Esophagus muscularis mucosa (tissue), 4 donors: ENCODE measurements at regions of chr1 and their contacts with region 1.

Region 1: GRCh38 chr1:100883963-100884362 is 10.7 kb downstream of the EXTL2 start:
- DNase-seq: no peak
- H3K4me3 ChIP-seq: no peak overlapping the region
- H3K27ac ChIP-seq: no peak overlapping the region
- H3K4me1 ChIP-seq: no peaks in the 10 kb centered on the region
- H3K27me3 ChIP-seq: no peaks in the 10 kb centered on the region
- CTCF ChIP-seq: no peak
- EP300 ChIP-seq: no peak
- POLR2A ChIP-seq: no peak

Region 2: DNA sequence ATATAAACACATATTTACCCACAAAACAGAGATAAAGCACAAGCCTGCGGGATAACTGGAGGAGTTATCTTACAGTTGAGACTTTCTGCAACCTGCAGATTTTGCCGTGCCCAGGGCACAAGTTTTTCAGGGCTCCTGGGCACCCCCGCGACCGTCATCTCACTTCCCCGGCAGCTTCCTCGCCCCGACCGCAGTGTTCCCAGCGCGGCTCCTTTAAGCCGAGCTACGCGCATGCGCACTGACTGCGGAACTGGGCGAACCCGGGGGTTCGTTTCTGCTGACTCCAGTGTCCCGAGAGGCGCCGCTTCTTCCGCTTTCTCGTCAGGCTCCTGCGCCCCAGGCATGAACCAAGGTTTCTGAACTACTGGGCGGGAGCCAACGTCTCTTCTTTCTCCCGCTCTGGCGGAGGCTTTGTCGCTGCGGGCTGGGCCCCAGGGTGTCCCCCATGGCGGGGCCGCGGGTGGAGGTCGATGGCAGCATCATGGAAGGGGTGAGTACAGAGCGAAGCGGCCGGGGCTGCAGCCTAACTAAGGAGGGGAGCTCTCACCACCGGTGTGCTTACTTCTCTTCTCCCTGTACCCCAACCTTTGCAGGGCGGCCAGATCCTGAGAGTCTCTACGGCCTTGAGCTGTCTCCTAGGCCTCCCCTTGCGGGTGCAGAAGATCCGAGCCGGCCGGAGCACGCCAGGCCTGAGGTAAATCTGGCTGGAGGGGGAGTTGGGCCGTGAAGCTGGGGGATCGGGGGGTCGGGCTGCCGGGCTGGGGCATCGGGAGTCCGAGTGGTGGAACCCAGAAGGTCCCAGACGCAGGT is 617.8 kb before region 1 on chr1 and contains the start of gene RTCA:
- intact Hi-C with region 1: loop called (anchors 10 kb)
- DNase-seq: peak; percentile 98
- H3K4me3 ChIP-seq: peak within 1 kb of the TSS; percentile 81 to 93 (median 85)
- H3K27ac ChIP-seq: peak within 1 kb of the TSS; percentile 79 to 91 (median 82)
- H3K4me1 ChIP-seq: peaks cover 11 to 44% (median 37%) of the 10 kb centered on the region in 4 donors
- H3K27me3 ChIP-seq: no peaks in the 10 kb centered on the region
- CTCF ChIP-seq: peak in 1 of 3 experiments; percentile 9
- EP300 ChIP-seq: no peak
- POLR2A ChIP-seq: no peak
- total RNA-seq, gene RTCA: 18.7 to 22.0 (median 21.4) TPM